H1 (cell line): ENCODE measurements at regions of chr1 and their contacts with region 1.

Region 1: DNA sequence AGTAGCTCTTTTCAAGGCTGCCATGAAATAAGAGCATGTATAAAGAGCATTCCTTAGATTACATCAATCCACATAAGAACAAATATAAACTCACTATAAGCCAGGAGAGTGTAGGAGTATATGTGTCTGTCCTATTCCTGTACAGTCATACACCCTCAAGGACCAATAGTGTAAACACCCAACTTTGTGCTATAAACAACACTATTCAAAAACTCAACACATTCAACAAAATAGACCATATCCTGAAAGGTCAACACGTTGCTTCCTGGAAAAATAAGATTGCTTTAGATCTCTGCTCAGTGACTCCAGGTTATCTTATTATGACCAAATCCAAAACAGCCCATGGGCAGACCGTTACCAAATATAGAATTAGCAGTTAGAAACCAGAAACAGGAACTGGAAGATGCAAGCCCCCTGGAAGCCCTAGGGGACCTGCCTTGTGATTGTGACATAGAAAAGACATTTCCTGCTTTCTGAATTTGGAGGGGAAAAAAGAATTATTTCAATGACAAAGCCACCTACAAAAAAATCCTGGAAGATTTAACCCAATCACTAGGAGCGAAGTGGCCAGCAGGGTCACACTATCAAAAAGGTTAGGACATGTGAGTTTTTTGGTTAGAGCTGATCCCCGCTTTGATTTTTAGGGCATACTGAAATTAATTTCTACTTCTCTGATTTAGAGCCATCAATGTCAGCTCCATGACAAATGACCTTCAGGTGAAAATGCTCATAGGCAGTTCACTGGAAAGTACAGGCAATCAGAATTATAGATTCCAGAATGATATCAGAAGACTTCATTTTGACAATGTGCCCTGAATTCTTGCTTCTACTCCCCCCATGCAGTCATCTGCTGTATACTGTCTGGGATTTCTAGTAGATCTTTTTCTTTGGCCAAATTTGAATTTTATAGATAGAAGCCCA is 59.9 kb downstream of the LRRC8C start:
- DNase-seq: no peak
- H3K4me3 ChIP-seq: no peak overlapping the region
- H3K27ac ChIP-seq: no peak overlapping the region
- H3K4me1 ChIP-seq: no peaks in the 10 kb centered on the region
- H3K27me3 ChIP-seq: no peaks in the 10 kb centered on the region
- CTCF ChIP-seq: no peak
- EP300 ChIP-seq: no peak
- POLR2A ChIP-seq: no peak
- RAD21 ChIP-seq: no peak

Region 2: DNA sequence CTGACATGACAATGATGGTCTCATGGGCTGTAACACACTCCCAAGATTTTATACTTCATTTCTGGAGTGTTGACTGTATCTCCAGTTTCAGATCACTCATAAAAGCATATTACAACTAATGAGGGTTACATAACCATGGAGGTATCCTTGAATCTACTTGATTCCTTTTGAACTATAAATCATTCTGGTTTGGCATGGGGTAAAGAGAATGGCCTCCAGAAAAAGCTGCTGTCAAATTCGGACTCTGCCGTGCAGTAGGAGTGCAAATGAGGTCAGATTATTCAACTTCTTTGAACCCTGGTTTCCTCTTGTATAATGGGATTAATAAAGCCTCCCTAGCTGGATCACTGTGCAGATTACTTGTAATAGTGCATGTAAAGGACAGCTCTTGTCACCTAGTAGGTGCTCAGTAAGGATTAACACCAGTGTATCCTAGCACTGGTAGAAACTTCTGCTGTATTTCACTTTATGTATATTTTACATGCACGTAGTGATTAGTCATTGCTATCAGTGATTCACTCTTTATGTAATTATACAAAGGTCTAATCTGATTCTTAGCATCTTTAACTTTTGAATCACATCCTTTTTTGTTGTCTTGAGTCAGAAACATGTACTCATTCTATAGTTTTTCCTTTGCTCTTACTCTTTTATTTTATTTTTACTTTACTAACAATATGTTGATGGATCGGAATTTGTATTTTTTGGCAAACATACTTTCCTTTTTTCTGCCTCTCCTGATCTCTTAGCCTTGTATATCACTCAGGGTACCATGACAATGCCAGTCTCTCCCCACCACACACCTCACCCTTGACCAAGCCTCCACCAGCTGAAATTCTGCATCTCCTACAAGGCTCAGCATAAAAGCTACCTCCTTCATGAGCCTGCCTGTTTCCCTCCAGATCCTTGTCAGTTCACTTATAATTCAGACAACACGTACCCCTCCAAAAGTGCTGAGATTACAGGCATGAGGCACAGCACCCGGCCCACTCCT is 56.7 kb before region 1 on chr1:
- CTCF ChIA-PET with region 1: no interaction called
- POLR2A ChIA-PET with region 1: no interaction called
- DNase-seq: no peak
- H3K4me3 ChIP-seq: no peak overlapping the region
- H3K27ac ChIP-seq: no peak overlapping the region
- H3K4me1 ChIP-seq: peaks cover 0 to 10% (median 7%) of the 10 kb centered on the region in 4 experiments; a peak in 5 of 7 replicates
- H3K27me3 ChIP-seq: peaks cover 0 to 23% (median 18%) of the 10 kb centered on the region in 4 experiments; a peak in 5 of 7 replicates
- CTCF ChIP-seq: no peak
- EP300 ChIP-seq: no peak
- POLR2A ChIP-seq: no peak
- RAD21 ChIP-seq: no peak

Region 3: DNA sequence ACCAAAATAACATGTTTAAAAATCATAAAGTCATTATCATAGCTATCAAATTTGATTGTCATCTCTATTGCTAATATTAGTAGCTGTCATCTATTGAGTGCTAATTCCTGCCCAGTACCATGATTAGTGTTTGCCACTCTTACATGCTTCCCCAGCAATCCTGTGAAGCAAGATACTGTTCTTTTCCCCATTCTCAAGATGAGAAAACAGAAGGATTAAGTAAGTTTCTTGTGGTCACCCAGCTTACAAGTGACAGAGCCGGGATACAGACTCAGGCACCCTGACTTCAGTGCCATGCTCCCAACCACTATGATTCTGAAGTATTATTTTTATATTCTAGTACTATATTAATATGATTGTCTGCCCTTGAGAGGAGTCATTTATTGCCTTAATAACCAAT is 23.4 kb before region 1 on chr1:
- CTCF ChIA-PET with region 1: interaction called, 12 read pairs
- POLR2A ChIA-PET with region 1: no interaction called
- DNase-seq: no peak
- H3K4me3 ChIP-seq: no peak overlapping the region
- H3K27ac ChIP-seq: no peak overlapping the region
- H3K4me1 ChIP-seq: no peaks in the 10 kb centered on the region
- H3K27me3 ChIP-seq: no peaks in the 10 kb centered on the region
- CTCF ChIP-seq: no peak
- EP300 ChIP-seq: no peak
- POLR2A ChIP-seq: no peak
- RAD21 ChIP-seq: no peak

Region 4: GRCh38 chr1:90236493-90236892 is 543.6 kb after region 1 on chr1:
- CTCF ChIA-PET with region 1: no interaction called
- POLR2A ChIA-PET with region 1: no interaction called
- DNase-seq: no peak
- H3K4me3 ChIP-seq: no peak overlapping the region
- H3K27ac ChIP-seq: no peak overlapping the region
- H3K4me1 ChIP-seq: no peaks in the 10 kb centered on the region
- H3K27me3 ChIP-seq: no peaks in the 10 kb centered on the region
- CTCF ChIP-seq: no peak
- EP300 ChIP-seq: no peak
- POLR2A ChIP-seq: no peak
- RAD21 ChIP-seq: no peak